Heart left ventricle (tissue), 16 donors: ENCODE measurements at regions of chr17 and their contacts with region 1.

Region 1: DNA sequence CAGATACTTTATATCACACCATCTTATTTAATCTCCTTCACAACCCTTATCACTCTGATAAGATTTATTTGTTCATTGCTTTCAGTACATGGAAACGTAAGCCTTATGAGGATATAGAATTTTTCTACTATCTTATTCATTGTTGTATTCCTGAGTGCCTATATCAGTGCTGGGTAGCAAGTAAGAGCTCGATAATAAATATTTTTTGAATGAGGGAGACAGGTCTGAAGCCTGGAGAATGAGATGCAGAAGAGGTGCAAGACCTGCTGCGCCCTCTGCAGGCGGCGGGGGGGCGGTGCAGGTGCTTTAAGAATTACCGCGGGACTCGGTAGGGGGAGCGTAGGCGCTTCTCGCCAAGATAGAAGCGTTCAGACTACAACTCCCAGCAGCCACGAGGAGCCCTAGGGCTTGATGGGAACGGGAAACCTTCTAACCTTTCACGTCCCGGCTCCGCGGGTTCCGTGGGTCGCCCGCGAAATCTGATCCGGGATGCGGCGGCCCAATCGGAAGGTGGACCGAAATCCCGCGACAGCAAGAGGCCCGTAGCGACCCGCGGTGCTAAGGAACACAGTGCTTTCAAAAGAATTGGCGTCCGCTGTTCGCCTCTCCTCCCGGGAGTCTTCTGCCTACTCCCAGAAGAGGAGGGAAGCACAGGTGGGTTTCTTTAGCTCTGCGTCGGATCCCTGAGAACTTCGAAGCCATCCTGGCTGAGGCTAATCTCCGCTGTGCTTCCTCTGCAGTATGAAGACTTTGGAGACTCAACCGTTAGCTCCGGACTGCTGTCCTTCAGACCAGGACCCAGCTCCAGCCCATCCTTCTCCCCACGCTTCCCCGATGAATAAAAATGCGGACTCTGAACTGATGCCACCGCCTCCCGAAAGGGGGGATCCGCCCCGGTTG is at the start of gene WRAP53:
- DNase-seq: peak; percentile 96 to 99 (median 97)
- ATAC-seq: peak; percentile 92 to 97 (median 94)
- H3K4me3 ChIP-seq: peak within 1 kb of the TSS; percentile 67 to 97 (median 86)
- H3K27ac ChIP-seq: peak within 1 kb of the TSS; percentile 47 to 99 (median 95)
- H3K4me1 ChIP-seq: peaks cover 0 to 37% (median 24%) of the 10 kb centered on the region in 12 donors
- H3K27me3 ChIP-seq: no peaks in the 10 kb centered on the region
- CTCF ChIP-seq: peak; percentile 98 to 100 (median 99)
- POLR2A ChIP-seq: peak in 1 of 2 donors; percentile 64
- total RNA-seq, gene WRAP53: 3.7 to 9.8 (median 4.8) TPM

Region 2: DNA sequence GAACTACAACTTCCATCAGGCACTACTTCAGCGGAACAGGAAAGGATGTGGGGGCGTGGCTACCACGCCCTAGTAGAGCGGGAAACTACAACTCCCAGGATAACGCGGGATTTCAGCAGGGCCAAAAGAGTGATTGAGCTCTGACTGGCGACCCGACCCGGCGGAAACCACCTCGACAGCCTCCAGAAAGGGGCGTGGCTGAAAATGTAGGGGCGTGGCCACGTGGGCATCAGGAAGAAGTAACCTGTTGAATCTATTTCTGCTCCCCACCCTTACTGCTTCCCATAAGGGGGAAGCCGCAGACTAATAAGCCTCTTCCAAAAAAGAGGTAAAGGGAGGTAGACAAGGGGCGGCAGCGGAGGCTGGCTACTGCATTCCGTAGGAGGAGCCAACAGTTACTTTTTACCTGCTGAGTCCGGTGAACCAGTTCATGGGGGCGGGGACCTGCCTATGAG is 252.9 kb before region 1 on chr17 and contains the start of gene TMEM102:
- intact Hi-C with region 1: loop called in 1 of 10 experiments (anchors 5 kb)
- DNase-seq: peak; percentile 95 to 97 (median 95)
- ATAC-seq: peak; percentile 87 to 94 (median 90)
- H3K4me3 ChIP-seq: peak within 1 kb of the TSS; percentile 9 to 75 (median 53)
- H3K27ac ChIP-seq: peak within 1 kb of the TSS in 11 of 12 donors; percentile 3 to 91 (median 52)
- H3K4me1 ChIP-seq: peaks cover 4 to 56% (median 40%) of the 10 kb centered on the region in 12 donors
- H3K27me3 ChIP-seq: peaks cover 0 to 35% (median 8%) of the 10 kb centered on the region in 9 donors
- CTCF ChIP-seq: peak in 1 of 12 donors; percentile 7
- POLR2A ChIP-seq: peak in 1 of 2 donors; percentile 49
- total RNA-seq, gene TMEM102: 1.7 to 6.8 (median 4.0) TPM

Region 3: GRCh38 chr17:7572588-7573323 is 115.4 kb before region 1 on chr17:
- intact Hi-C with region 1: loop called in 2 of 10 experiments (anchors 5 kb)
- DNase-seq: peak; percentile 99 to 100 (median 99)
- ATAC-seq: peak; percentile 92 to 96 (median 96)
- H3K4me3 ChIP-seq: peak overlapping the region; percentile 77 to 100 (median 100)
- H3K27ac ChIP-seq: peak overlapping the region; percentile 80 to 100 (median 98)
- H3K4me1 ChIP-seq: peaks cover 4 to 50% (median 32%) of the 10 kb centered on the region in 12 donors
- H3K27me3 ChIP-seq: no peaks in the 10 kb centered on the region
- CTCF ChIP-seq: no peak
- POLR2A ChIP-seq: peak; percentile 95 to 99

Region 4: DNA sequence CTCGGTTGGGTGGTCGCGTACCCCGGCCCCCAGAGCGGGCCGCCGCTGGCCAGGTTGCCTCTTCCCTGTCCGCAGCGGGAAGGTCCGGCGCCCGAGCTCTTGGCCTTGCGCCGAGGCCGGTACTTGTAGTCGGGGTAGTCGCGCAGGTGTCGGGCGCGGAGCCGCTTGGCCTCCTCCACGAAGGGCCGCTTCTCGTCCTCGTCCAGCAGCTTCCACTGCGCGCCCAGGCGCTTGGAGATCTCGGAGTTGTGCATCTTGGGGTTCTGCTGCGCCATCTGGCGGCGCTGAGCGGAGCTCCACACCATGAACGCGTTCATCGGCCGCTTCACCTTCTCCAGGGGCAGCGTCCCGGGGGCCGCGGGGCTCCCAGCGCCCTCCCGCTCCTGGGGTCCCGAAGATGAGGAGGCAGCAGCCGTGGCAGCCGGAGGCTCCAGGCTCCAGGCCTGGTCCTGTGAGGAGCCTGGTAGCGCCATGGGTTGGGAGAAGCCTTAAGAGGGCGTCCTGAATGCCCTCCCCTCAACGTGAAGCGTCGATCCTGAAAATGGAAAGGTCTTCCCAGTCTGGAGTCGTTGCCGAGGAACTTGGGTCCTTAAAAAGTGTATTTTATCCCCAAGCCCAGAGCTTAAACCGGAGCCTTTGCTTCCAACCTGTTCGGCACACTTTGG is 98.8 kb before region 1 on chr17:
- intact Hi-C with region 1: loop called in 3 of 10 experiments (anchors 5 kb)
- DNase-seq: peak; percentile 80 to 91 (median 88)
- ATAC-seq: peak; percentile 68 to 85 (median 80)
- H3K4me3 ChIP-seq: peak overlapping the region; percentile 5 to 66 (median 46)
- H3K27ac ChIP-seq: peak overlapping the region in 9 of 12 donors; percentile 13 to 89 (median 51)
- H3K4me1 ChIP-seq: peaks cover 3 to 49% (median 26%) of the 10 kb centered on the region in 12 donors
- H3K27me3 ChIP-seq: no peaks in the 10 kb centered on the region
- CTCF ChIP-seq: peak; percentile 81 to 98 (median 90)
- POLR2A ChIP-seq: no peak

Region 5: DNA sequence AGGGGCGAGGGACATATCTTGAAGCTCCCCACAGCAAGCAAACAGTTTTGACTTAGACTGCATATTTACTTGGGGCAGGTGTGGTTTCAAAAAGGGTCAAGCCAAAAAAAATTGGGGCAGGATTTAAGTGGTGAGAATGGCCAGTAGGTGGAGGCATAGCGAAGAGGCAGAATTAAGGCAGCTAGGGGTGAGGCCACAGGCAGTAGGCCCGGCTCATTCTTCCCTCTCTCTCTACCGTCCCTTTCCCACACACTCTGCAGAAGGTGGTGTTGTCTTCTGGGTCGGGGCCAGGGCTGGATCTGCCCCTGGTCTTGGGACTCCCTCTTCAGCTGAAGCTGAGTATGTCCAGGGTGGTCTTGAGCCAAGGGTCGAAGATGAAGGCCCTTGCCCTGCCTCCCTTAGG is 55.7 kb before region 1 on chr17:
- intact Hi-C with region 1: loop called (anchors 1 to 5 kb)
- DNase-seq: no peak
- ATAC-seq: peak in 1 of 4 donors; percentile 21
- H3K4me3 ChIP-seq: no peak overlapping the region
- H3K27ac ChIP-seq: no peak overlapping the region
- H3K4me1 ChIP-seq: peaks cover 0 to 19% (median 4%) of the 10 kb centered on the region in 12 donors
- H3K27me3 ChIP-seq: no peaks in the 10 kb centered on the region
- CTCF ChIP-seq: peak; percentile 19 to 57 (median 36)
- POLR2A ChIP-seq: no peak

Region 6: DNA sequence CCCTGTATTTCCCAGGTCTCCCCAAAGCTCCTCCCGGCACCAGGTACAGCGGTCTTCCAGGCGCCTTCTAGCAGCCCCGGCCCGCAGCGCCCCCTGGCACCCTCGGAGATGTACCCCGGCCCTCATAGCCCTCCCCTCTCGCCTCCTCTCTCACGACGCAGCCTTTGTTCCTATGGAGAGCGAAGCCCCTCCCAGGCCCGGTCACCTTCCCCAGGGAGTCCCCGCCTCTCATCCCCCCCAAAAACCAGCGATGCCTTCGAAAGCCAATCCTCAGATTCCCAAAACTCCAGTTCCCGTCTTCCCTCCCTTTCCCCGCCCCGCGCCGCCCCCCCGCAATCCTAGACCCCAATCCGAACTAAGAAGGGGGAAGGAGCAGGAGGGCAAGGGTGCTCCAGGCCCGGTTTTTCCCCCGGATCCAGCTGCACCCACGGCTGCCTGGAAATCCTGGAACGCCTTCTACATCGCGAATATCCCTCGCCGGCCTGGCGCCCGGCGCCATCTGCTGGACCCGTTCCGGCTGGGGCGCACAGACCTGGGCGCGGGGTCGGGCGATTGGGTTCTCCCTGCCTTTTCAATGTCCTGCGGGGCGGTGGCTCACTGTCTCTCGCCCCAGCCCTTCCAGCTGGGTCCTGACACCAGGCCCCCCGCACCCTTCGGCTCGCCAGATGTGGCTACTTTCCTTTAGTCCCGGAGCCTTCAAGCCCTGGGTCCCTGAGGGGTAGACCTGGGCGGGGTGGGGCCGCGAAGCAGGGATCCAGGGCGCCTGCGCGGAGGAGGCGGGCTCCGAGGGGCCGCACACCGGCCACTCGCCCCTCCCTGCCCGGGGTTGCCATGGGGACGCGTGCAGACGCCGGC is 29.0 kb after region 1 on chr17 and contains the start of gene DNAH2:
- intact Hi-C with region 1: loop called in 1 of 10 experiments (anchors 2 kb)
- DNase-seq: peak; percentile 74 to 87 (median 79)
- ATAC-seq: peak; percentile 78 to 92 (median 88)
- H3K4me3 ChIP-seq: peak within 1 kb of the TSS; percentile 11 to 85 (median 59)
- H3K27ac ChIP-seq: peak within 1 kb of the TSS in 4 of 12 donors; percentile 43 to 69 (median 62)
- H3K4me1 ChIP-seq: peaks cover 0 to 21% (median 8%) of the 10 kb centered on the region in 12 donors
- H3K27me3 ChIP-seq: peaks cover 0 to 54% (median 18%) of the 10 kb centered on the region in 9 donors
- CTCF ChIP-seq: peak; percentile 1 to 64 (median 44)
- POLR2A ChIP-seq: peak in 1 of 2 donors; percentile 22
- total RNA-seq, gene DNAH2: 0.02 to 0.56 (median 0.05) TPM in 5 of 9 donors, not detected in the others

Region 7: DNA sequence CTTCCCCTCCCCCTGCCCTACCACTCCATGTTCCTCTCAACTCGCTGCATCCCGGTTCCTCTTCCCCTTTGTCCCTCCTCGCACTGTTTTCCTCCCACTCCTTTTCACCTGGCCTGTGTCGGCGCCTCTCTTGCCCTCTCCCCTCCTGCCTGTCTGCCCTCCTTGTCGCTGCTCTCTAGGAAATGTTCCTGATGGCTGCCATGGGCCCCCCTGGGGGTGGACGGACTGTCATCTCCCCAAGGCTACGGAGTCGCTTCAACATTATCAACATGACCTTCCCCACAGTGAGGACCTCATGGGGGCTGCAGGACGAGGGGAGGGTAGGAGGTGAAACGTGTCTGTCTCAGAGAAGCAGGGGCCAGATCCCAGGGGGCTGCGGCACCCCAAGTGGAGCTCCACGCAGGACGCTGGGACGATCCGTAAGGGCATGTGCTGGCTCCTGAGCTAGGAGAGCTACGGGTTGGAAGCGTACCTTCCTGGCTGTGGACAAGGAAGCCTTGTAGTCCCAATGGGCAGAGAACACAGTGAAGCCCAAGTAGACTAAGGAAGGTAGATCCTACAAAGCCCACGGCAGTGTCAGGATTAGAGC is 106.0 kb after region 1 on chr17:
- intact Hi-C with region 1: no loop called
- DNase-seq: no peak
- ATAC-seq: no peak
- H3K4me3 ChIP-seq: no peak overlapping the region
- H3K27ac ChIP-seq: no peak overlapping the region
- H3K4me1 ChIP-seq: no peaks in the 10 kb centered on the region
- H3K27me3 ChIP-seq: no peaks in the 10 kb centered on the region
- CTCF ChIP-seq: no peak
- POLR2A ChIP-seq: no peak

Region 8: DNA sequence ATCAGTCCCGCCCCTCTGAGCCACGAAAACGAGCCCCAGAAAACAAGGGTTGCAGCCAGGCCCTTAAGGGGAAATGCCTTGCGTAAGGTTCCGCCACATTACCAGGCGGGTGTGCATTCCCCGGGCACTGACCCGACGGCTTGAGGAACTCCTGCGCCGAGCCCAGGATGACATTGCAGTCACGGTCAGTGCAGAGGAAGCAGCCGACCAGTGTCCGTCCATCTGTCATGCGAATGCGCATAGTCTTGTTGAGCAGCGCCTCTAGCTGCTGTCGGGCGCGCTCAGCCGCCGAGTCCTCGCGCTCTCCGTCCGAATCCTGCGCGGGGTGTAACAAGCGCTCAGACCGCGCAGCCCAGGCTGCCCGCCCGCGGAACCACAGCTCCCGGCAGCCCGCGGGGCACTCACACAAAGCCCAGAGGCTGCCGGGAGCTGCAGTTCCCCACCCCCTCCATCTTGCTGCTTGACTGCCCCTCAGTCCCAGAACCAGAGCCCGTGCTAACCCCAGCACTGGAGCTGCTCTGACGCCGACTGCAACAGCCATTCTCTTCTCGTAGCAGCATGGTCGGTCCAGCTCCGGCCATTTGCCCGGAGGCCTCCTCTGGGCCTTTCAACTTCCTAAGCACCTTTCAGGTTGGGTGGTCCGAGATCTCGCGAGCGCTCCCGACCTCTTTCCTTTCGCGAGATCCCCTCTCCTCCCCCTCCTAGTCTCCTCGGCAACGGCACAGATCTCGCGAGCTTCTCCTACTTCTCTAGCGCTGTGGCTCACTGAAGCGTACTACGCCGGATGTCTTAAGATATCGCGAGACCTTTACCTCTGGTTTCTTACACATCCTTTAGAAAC is 168.9 kb after region 1 on chr17 and contains the start of gene NAA38:
- intact Hi-C with region 1: loop called in 1 of 10 experiments (anchors 5 kb)
- DNase-seq: peak; percentile 96 to 98 (median 97)
- ATAC-seq: peak; percentile 87 to 90 (median 90)
- H3K4me3 ChIP-seq: peak within 1 kb of the TSS; percentile 39 to 85 (median 68)
- H3K27ac ChIP-seq: peak within 1 kb of the TSS; percentile 74 to 97 (median 92)
- H3K4me1 ChIP-seq: peaks cover 0 to 45% (median 33%) of the 10 kb centered on the region in 12 donors
- H3K27me3 ChIP-seq: no peaks in the 10 kb centered on the region
- CTCF ChIP-seq: peak in 10 of 12 donors; percentile 12 to 74 (median 44)
- POLR2A ChIP-seq: peak in 1 of 2 donors; percentile 32
- total RNA-seq, gene NAA38: 60.9 to 141 (median 72.4) TPM